OCI-LY7 (cell line): ENCODE measurements at regions of chr15 and their contacts with region 1.

Region 1: GRCh38 chr15:75843802-75844581 is 745 bp downstream of the UBE2Q2 start:
- DNase-seq: peak; percentile 64
- H3K4me3 ChIP-seq: peak overlapping the region; percentile 98
- H3K27ac ChIP-seq: peak overlapping the region; percentile 53
- H3K4me1 ChIP-seq: peaks cover 40% of the 10 kb centered on the region
- CTCF ChIP-seq: peak; percentile 29; the same call in 1 of the 2 replicates

Region 2: GRCh38 chr15:75903331-75904239 is 59.6 kb after region 1 on chr15 and contains the start of gene FBXO22:
- CTCF ChIA-PET with region 1: no interaction called
- POLR2A ChIA-PET with region 1: interaction called, 4 read pairs
- intact Hi-C with region 1: loop called (anchors 2 kb)
- DNase-seq: peak; percentile 92
- H3K4me3 ChIP-seq: peak within 1 kb of the TSS; percentile 93
- H3K27ac ChIP-seq: peak within 1 kb of the TSS; percentile 60
- H3K4me1 ChIP-seq: peaks cover 17% of the 10 kb centered on the region
- CTCF ChIP-seq: no peak
- total RNA-seq, gene FBXO22: 23.5 and 32.4 TPM in 2 replicates